ENCODE measurements at regions of chr11 and their contacts with region 1.

Region 1: GRCh38 chr11:65506770-65507505 is 8.1 kb downstream of the MALAT1 start:
- DNase-seq: peak; percentile 64 to 78 (median 72)
- H3K4me3 ChIP-seq: peak overlapping the region; percentile 82
- H3K27ac ChIP-seq: peak overlapping the region; percentile 82 to 91
- H3K4me1 ChIP-seq: peaks cover 2% of the 10 kb centered on the region
- H3K27me3 ChIP-seq: no peaks in the 10 kb centered on the region
- CTCF ChIP-seq: no peak
- EP300 ChIP-seq: no peak
- POLR2A ChIP-seq: no peak

Region 2: GRCh38 chr11:65382033-65382807 is 124.7 kb before region 1 on chr11 and contains the start of gene SLC25A45:
- intact Hi-C with region 1: loop called in 2 of 4 experiments (anchors 5 kb)
- DNase-seq: peak; percentile 92 to 96 (median 94)
- H3K4me3 ChIP-seq: peak within 1 kb of the TSS; percentile 42
- H3K27ac ChIP-seq: peak within 1 kb of the TSS; percentile 93 to 96
- H3K4me1 ChIP-seq: peaks cover 16% of the 10 kb centered on the region
- H3K27me3 ChIP-seq: no peaks in the 10 kb centered on the region
- CTCF ChIP-seq: peak; percentile 71 to 100 (median 99)
- EP300 ChIP-seq: peak; percentile 52
- POLR2A ChIP-seq: peak; percentile 53
- total RNA-seq, gene SLC25A45: 3.2 to 8.7 (median 4.6) TPM

Region 3: GRCh38 chr11:65393513-65394090 is 113.3 kb before region 1 on chr11:
- intact Hi-C with region 1: no loop called
- DNase-seq: peak in 1 of 5 donors; percentile 34
- H3K4me3 ChIP-seq: no peak overlapping the region
- H3K27ac ChIP-seq: no peak overlapping the region
- H3K4me1 ChIP-seq: peaks cover 2% of the 10 kb centered on the region
- H3K27me3 ChIP-seq: no peaks in the 10 kb centered on the region
- CTCF ChIP-seq: no peak
- EP300 ChIP-seq: no peak
- POLR2A ChIP-seq: no peak

Region 4: GRCh38 chr11:65418711-65419459 is 88.1 kb before region 1 on chr11:
- intact Hi-C with region 1: loop called in 3 of 4 experiments (anchors 2 kb)
- DNase-seq: peak; percentile 93 to 97 (median 96)
- H3K4me3 ChIP-seq: peak overlapping the region; percentile 86
- H3K27ac ChIP-seq: peak overlapping the region; percentile 96 to 97
- H3K4me1 ChIP-seq: peaks cover 23% of the 10 kb centered on the region
- H3K27me3 ChIP-seq: no peaks in the 10 kb centered on the region
- CTCF ChIP-seq: no peak
- EP300 ChIP-seq: peak; percentile 71
- POLR2A ChIP-seq: peak; percentile 36

Region 5: DNA sequence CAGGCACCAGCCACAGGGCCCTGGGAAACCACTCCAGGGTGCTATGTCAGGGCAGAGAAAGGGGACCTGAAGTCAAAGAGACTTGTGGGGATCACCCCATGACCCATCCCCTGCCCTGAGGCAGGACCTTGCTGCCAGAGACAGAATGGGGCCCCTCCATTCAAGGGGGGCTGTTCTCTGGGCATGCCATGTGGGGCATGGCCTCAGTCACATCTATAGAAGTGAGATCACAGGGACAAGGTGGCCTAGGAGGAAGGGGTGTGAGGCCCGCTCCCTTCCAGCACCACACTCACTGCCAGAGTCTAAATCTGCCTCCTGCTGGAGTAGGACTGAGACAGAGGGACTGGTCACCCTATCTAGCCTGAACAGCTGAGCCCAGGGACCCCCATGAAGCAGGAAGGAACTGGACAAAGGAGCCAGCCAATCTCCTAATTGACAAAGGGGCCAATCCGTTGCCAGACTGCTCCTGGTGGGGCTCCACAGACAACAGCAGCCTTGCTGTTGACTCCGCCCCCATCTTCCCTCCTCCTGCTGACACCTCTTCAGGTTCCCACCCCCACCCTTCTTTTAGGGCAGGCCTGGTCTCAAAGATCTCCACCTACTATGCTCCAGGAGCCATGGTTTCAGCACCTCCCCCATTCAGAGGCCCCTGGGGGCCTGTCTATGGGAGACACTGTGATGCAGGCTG is 58.4 kb before region 1 on chr11:
- intact Hi-C with region 1: no loop called
- DNase-seq: peak in 2 of 5 donors; percentile 43 to 44
- H3K4me3 ChIP-seq: no peak overlapping the region
- H3K27ac ChIP-seq: no peak overlapping the region
- H3K4me1 ChIP-seq: no peaks in the 10 kb centered on the region
- H3K27me3 ChIP-seq: no peaks in the 10 kb centered on the region
- CTCF ChIP-seq: no peak
- EP300 ChIP-seq: no peak
- POLR2A ChIP-seq: no peak

Region 6: GRCh38 chr11:65471410-65471762 is 35.6 kb before region 1 on chr11:
- intact Hi-C with region 1: loop called in 3 of 4 experiments (anchors 5 kb)
- DNase-seq: peak; percentile 78 to 84 (median 80)
- H3K4me3 ChIP-seq: peak overlapping the region; percentile 28
- H3K27ac ChIP-seq: peak overlapping the region; percentile 90 to 94
- H3K4me1 ChIP-seq: peaks cover 5% of the 10 kb centered on the region
- H3K27me3 ChIP-seq: no peaks in the 10 kb centered on the region
- CTCF ChIP-seq: peak; percentile 17 to 64 (median 54)
- EP300 ChIP-seq: no peak
- POLR2A ChIP-seq: no peak

Region 7: GRCh38 chr11:65540297-65541092 is 33.6 kb after region 1 on chr11:
- intact Hi-C with region 1: loop called in 1 of 4 experiments (anchors 1 kb)
- DNase-seq: peak; percentile 89 to 96 (median 93)
- H3K4me3 ChIP-seq: peak overlapping the region; percentile 51
- H3K27ac ChIP-seq: peak overlapping the region; percentile 84 to 86
- H3K4me1 ChIP-seq: peaks cover 8% of the 10 kb centered on the region
- H3K27me3 ChIP-seq: no peaks in the 10 kb centered on the region
- CTCF ChIP-seq: peak; percentile 71 to 97 (median 92)
- EP300 ChIP-seq: peak; percentile 50
- POLR2A ChIP-seq: peak; percentile 21

Measured in ovary (tissue), 10 donors.